ENCODE measurements at regions of chr11 and their contacts with region 1.

Region 1: DNA sequence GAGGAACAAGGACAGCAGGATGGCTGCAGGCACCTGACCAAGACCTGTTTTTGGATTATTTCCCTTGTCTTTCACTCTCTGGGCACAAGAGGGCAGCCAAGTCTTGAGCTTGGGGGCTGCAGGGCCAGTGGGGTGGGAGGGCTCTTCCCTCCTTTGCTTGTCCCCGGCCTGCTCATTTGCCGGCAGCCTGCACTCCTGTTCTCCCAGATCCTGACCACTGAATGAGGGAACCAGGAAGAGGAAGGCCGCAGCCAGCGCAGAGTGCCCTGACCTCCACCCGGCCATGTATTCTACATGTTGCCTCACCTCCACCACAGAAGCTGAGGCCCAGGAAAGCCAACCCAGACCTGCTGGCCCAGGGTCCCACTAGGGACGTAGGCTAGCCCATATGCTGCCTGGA is 15.5 kb upstream of the NNMT start:
- DNase-seq: peak; percentile 75
- ATAC-seq: peak; percentile 71

Region 2: DNA sequence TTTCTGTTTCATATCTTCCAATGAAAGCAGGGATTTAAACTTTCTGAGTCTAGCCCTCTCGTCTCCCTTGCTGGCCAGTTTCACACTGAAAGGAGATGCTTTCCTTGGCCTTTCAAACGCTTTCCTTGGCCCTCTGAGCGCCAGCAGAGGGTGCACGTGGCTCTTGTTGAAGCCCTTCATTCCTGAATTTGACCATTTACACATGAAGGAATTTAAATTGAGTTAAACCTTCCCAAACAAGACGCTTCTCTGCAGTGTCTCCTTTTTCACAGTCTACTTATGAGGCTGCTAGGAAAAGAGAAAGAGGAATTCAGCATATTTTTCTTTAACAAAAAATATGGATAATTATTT is 37.1 kb after region 1 on chr11:
- intact Hi-C with region 1: loop called (anchors 5 kb)
- DNase-seq: no peak
- ATAC-seq: no peak

Region 3: GRCh38 chr11:114340311-114341131 is 59.8 kb after region 1 on chr11:
- intact Hi-C with region 1: loop called (anchors 5 kb)
- DNase-seq: no peak
- ATAC-seq: peak; percentile 77

Region 4: DNA sequence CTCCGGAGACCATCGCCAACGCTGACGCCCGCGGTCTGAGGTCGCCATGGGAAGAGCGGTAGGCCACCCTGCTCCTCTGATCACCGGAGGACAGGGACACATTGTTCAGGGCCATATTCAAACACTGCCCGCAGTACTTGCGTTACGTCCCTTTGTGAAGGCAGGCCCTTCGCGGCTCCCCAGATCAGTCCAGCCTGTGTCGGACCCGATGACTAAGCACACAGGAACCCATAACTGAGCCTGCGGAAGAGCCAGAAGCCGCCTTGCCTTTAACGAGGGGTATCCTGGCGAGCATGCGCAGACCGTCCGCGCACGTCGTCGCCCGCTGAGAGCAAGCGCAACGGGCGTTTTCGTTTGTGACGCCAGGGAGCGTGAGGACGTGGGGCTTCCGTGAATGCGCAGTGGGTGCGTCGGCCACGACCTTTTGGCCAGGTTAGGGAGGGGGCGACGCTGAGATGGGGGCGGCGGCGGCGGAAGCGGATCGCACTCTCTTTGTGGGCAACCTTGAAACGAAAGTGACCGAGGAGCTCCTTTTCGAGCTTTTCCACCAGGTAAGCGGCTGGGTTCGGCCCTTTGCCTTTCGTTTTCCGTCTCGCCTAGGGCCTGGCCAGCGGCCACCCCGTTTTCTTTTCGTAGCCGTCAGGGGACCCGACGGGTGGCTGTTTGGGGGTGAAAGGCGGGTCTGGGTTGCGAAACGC is 119.7 kb after region 1 on chr11 and contains the starts of genes C11orf71 and RBM7:
- intact Hi-C with region 1: loop called (anchors 10 kb)
- DNase-seq: peak; percentile 99
- ATAC-seq: peak; percentile 98
- total RNA-seq, gene C11orf71: 9.3 TPM
- total RNA-seq, gene RBM7: 19.6 TPM

Region 5: DNA sequence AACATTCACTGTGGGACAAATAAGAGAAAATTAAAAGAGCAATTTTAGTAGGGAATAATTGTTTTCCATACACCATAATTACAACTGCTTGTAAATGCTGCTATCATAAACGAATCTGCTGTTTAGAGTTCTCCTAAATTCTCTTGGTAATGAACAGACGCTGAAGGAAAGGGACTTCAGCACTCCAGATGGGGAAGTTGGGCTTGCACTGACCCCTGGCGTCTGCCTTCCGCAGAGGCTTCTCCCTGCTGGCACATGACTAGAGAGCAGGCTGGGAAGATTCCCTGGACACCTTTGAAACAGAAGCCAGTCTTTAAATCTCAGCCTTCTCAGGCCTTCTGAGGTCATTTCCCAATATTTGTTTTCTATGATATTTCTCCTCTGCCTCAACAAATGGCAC is 481.7 kb after region 1 on chr11:
- intact Hi-C with region 1: loop called (anchors 5 kb)
- DNase-seq: no peak
- ATAC-seq: peak; percentile 81